ENCODE measurements at regions of chr16 and their contacts with region 1.

Region 1: GRCh38 chr16:29852654-29853053 is 10.4 kb downstream of the CDIPT start:
- DNase-seq: no peak
- ATAC-seq: peak; percentile 54
- H3K4me3 ChIP-seq: no peak overlapping the region
- H3K27ac ChIP-seq: peak overlapping the region; percentile 72
- H3K4me1 ChIP-seq: peaks cover 5% of the 10 kb centered on the region
- H3K27me3 ChIP-seq: no peaks in the 10 kb centered on the region
- CTCF ChIP-seq: no peak

Region 2: GRCh38 chr16:29825145-29826044 is 27.3 kb before region 1 on chr16:
- intact Hi-C with region 1: no loop called
- DNase-seq: no peak
- ATAC-seq: no peak
- H3K4me3 ChIP-seq: peak overlapping the region; percentile 8
- H3K27ac ChIP-seq: peak overlapping the region; percentile 93
- H3K4me1 ChIP-seq: peaks cover 64% of the 10 kb centered on the region
- H3K27me3 ChIP-seq: no peaks in the 10 kb centered on the region
- CTCF ChIP-seq: no peak

Region 3: DNA sequence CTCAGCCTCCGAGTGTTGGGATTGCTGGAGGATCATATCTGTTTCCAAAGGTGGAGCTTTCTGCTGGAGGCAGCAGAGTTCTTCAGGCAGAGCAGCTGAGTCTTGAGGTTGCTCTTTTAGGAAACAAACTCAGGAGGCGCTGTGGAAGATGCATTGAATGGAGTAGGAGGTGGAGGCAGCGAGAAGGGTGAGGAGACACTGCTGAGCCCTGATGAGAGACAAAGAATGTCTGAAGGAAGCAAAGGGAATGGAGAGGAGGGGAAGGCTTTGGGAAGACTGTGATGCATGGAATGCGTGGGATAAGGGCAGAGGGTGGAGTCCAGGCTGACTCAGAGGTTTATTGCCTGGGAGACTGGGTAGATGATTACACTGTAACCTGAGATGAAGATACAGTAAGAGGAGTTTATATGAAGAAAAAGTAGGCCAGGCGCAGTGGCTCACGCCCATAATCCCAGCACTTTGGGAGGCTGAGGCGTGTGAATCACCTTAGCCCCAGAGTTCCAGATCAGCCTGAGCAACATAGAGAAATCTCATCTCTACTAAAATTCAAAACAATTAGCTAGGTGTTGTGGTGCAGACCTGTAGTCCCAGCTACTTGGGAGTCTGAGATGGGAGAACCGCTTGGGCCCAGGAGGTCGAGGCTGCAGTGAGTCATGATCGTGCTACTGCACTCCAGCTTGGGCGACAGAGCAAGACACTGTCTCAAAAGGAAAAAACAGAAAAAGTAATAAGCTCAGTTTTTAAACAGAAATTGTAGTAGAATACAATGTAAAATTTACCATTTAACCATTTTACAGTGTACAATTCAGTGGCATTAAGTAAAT is 91.4 kb after region 1 on chr16:
- intact Hi-C with region 1: no loop called
- DNase-seq: no peak
- ATAC-seq: peak; percentile 91
- H3K4me3 ChIP-seq: no peak overlapping the region
- H3K27ac ChIP-seq: no peak overlapping the region
- H3K4me1 ChIP-seq: no peaks in the 10 kb centered on the region
- H3K27me3 ChIP-seq: no peaks in the 10 kb centered on the region
- CTCF ChIP-seq: peak; percentile 9

Region 4: GRCh38 chr16:30005341-30006094 is 152.9 kb after region 1 on chr16:
- intact Hi-C with region 1: loop called (anchors 10 kb)
- DNase-seq: no peak
- ATAC-seq: peak; percentile 65
- H3K4me3 ChIP-seq: no peak overlapping the region
- H3K27ac ChIP-seq: no peak overlapping the region
- H3K4me1 ChIP-seq: peaks cover 2% of the 10 kb centered on the region
- H3K27me3 ChIP-seq: peaks cover 22% of the 10 kb centered on the region
- CTCF ChIP-seq: peak; percentile 85

Measured in upper lobe of right lung (tissue), 1 donor.